ENCODE measurements at regions of chr18 and their contacts with region 1.

Region 1: GRCh38 chr18:69636529-69637301 is 236.0 kb downstream of the DOK6 start:
- DNase-seq: no peak
- ATAC-seq: peak; percentile 65

Region 2: DNA sequence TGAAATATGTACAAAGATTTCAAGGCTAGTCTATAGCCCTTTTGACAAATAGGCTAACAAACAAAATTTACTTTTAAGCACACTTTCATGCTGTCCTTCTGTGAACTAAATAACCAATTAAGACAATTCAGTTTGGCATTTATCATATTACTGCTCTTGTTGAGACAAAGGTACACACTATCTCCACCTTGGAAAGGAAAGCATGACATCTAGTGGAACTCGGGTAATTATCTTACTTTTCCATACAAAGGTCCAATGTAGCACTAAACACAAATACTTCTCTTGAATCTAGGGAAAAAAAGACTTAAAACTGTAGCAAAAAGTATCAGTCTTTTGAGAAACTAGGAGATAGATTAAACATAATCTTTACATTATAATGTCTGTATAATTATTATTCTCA is 436.0 kb after region 1 on chr18:
- intact Hi-C with region 1: loop called (anchors 5 kb)
- DNase-seq: no peak
- ATAC-seq: peak; percentile 74

Measured in Right ventricle myocardium superior (tissue), 1 donor.